Activated naive CD4-positive, alpha-beta T cell treated with anti-CD3 and anti-CD28 coated beads for 36 hours (primary cell): ENCODE measurements at regions of chr1 and their contacts with region 1.

Region 1: GRCh38 chr1:223189903-223190724 is 47.1 kb upstream of the TLR5 start:
- DNase-seq: peak; percentile 76
- H3K4me3 Mint-ChIP-seq: no peak overlapping the region
- H3K27ac Mint-ChIP-seq: peak overlapping the region; percentile 67
- H3K4me1 Mint-ChIP-seq: peaks cover 41% of the 10 kb centered on the region
- H3K27me3 Mint-ChIP-seq: peaks cover 9% of the 10 kb centered on the region

Region 2: GRCh38 chr1:223298701-223299100 is 108.6 kb after region 1 on chr1:
- CTCF ChIA-PET with region 1: no interaction called
- intact Hi-C with region 1: loop called (anchors 2 kb)
- DNase-seq: no peak
- H3K4me3 Mint-ChIP-seq: no peak overlapping the region
- H3K27ac Mint-ChIP-seq: no peak overlapping the region
- H3K4me1 Mint-ChIP-seq: peaks cover 28% of the 10 kb centered on the region
- H3K27me3 Mint-ChIP-seq: no peaks in the 10 kb centered on the region

Region 3: DNA sequence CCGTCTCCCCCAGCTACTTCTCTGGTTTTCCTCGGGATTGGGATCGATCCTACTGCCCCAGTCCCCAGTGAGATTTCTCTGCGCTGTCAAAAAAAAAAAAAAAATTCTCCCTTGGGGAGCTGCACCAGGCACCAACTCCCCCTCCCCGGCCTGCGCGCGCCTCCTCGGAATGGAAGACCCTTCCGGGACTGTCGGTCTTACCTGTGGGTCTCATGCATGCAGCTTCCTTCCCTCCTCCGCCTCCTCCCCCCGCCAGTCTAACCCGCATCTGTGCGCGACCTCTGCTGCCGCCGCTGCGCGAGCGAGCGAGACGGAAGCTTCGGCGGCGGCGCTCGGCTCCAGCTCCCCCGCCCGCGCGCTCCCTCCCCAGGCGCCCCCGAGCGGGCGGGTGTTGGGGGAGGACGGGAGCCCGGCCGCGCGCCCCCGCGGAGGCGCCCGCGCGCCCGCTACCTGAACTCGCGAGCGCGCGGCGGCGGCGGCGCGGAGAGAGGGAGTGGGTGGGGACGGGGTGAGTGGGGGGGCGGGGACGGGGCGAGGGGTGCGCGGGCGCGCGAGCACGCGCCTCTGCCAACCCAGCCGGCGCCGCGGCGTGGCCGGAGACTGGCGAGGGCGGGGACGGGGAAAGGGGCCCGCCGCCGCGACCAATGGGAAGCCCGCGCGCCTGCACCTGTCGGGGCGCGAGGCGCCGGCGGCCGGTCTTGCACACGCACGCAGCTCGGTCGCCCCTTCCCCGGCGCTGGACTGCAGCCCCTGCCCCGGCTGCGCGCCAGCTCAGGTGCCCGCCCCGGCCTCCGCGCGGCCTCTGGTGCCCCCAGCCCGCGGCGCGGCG is 174.0 kb after region 1 on chr1 and contains the start of gene SUSD4:
- CTCF ChIA-PET with region 1: no interaction called
- intact Hi-C with region 1: no loop called
- DNase-seq: peak; percentile 77
- H3K4me3 Mint-ChIP-seq: peak within 1 kb of the TSS; percentile 89
- H3K27ac Mint-ChIP-seq: no peak within 1 kb of the TSS
- H3K4me1 Mint-ChIP-seq: peaks cover 18% of the 10 kb centered on the region
- H3K27me3 Mint-ChIP-seq: peaks cover 10% of the 10 kb centered on the region
- total RNA-seq, gene SUSD4: 1.1 to 1.8 TPM